CD4-positive, alpha-beta memory T cell (primary cell): ENCODE measurements at regions of chr13 and their contacts with region 1.

Region 1: DNA sequence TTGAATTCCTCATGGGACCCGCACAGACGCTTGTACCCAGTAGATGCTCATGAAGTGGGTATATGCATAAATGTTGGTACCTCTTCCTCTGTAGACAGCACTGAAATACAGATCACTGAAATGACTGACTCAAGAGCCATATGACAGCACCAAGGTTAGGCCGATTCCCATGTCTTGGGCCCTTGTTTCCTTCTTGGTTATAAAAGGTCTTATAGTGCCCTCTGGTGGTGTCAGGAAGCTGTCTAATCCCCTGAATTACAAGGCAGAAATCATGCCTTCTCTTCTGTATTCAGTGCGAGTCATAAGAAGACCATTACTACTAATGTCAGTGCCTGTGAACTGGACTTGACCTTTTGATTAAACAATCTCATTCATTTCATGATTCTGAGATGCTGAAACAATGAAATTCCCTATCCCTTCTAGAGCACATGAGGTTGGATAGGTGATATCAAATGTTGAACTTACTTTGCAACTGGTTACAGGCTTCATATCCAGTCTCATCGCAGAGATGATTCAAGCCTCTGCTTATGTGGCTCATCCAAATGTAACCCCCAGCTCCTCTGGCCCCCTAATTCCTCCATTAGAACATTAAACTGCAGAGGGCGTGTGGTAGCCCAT is 59.7 kb downstream of the SPATA13 start:
- DNase-seq: peak; percentile 64 to 72 (median 67)
- H3K4me3 ChIP-seq: no peak overlapping the region
- H3K4me3 Mint-ChIP-seq: no peak overlapping the region
- H3K27ac ChIP-seq: no peak overlapping the region
- H3K27ac Mint-ChIP-seq: peak overlapping the region in 2 of 7 donors; percentile 17 to 61
- H3K4me1 ChIP-seq: peaks cover 16% of the 10 kb centered on the region
- H3K4me1 Mint-ChIP-seq: peaks cover 13 to 30% (median 19%) of the 10 kb centered on the region in 4 donors
- H3K27me3 ChIP-seq: no peaks in the 10 kb centered on the region
- H3K27me3 Mint-ChIP-seq: peaks cover 0 to 2% of the 10 kb centered on the region in 2 donors

Region 2: DNA sequence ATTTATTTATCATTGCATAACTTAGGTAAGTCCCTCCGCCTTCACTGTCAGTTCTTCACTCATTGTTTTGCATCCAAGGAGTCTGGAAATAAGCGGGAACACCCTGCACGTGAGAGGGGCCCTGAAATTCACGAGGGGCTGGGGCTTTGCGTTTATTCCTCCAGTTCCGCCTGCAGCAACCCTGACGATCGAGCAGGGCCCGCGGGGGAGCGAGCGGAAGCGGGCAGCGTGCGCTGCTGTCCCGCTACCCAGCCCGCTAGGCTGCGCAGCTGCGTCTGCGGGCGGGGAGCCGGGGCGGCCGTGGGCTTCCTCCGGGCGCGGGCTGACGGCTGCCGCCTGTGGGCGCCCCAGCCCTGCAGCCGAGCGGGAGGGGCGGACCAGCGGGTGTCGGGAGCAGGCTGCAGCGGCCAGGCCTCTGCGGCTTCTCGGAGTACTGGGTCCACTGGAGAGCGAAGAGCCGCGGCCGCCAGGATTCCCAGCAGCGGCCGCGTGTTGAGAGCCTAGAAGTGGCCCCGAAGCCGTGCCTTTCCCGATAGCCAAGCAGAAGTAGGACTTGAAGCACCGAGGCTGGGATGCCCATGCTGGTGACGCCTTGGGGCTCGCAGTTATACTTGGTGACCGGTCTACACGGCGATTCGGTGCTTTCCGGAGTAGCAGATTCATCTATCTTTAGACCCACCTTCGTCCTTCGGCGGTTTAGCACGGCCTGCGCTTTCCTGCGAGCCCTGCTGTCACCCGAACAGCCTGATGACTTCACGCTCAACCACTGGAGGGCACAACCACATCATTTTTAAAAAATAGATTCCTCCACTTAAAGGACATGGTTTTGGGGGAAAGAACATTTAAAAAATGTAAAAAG is 753.8 kb before region 1 on chr13:
- CTCF ChIA-PET with region 1: interaction called, 4 read pairs
- POLR2A ChIA-PET with region 1: no interaction called
- intact Hi-C with region 1: loop called (anchors 1 kb)
- DNase-seq: peak; percentile 43 to 65 (median 63)
- H3K4me3 ChIP-seq: peak overlapping the region in 1 of 2 donors; percentile 44
- H3K4me3 Mint-ChIP-seq: peak overlapping the region; percentile 76 to 89 (median 83)
- H3K27ac ChIP-seq: no peak overlapping the region
- H3K27ac Mint-ChIP-seq: peak overlapping the region in 3 of 7 donors; percentile 11 to 69 (median 63)
- H3K4me1 ChIP-seq: peaks cover 4% of the 10 kb centered on the region
- H3K4me1 Mint-ChIP-seq: peaks cover 0 to 8% (median 2%) of the 10 kb centered on the region in 4 donors
- H3K27me3 ChIP-seq: no peaks in the 10 kb centered on the region
- H3K27me3 Mint-ChIP-seq: peaks cover 7% of the 10 kb centered on the region in 2 donors

Region 3: GRCh38 chr13:24020375-24020830 is 199.8 kb before region 1 on chr13:
- CTCF ChIA-PET with region 1: interaction called, 16 read pairs
- POLR2A ChIA-PET with region 1: no interaction called
- intact Hi-C with region 1: loop called (anchors 1 kb)
- DNase-seq: peak in 3 of 5 donors; percentile 9 to 17 (median 13)
- H3K4me3 ChIP-seq: no peak overlapping the region
- H3K4me3 Mint-ChIP-seq: no peak overlapping the region
- H3K27ac ChIP-seq: no peak overlapping the region
- H3K27ac Mint-ChIP-seq: no peak overlapping the region
- H3K4me1 ChIP-seq: no peaks in the 10 kb centered on the region
- H3K4me1 Mint-ChIP-seq: no peaks in the 10 kb centered on the region
- H3K27me3 ChIP-seq: no peaks in the 10 kb centered on the region
- H3K27me3 Mint-ChIP-seq: peaks cover 1 to 2% of the 10 kb centered on the region in 2 donors

Region 4: DNA sequence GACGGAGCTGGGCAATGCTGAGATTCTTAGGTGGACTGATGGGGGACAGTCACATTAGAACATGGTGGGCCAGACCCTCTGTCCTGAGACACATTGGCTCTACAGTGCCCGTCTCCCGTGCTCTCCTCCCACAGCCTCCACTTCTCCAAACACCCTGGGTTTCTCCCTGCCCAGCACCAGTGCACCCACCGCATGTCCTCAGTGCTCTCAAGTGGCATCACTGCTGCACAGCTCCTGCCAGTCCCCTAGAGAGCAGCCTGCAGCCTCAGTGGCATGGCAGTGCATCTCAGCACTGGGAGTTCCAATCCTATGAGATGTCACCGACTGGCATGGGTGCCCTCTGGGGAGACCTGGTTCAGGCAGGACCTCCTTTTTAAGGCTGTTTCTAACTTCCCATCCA is 70.1 kb before region 1 on chr13:
- CTCF ChIA-PET with region 1: no interaction called
- POLR2A ChIA-PET with region 1: no interaction called
- intact Hi-C with region 1: no loop called
- DNase-seq: no peak
- H3K4me3 ChIP-seq: no peak overlapping the region
- H3K4me3 Mint-ChIP-seq: no peak overlapping the region
- H3K27ac ChIP-seq: no peak overlapping the region
- H3K27ac Mint-ChIP-seq: no peak overlapping the region
- H3K4me1 ChIP-seq: no peaks in the 10 kb centered on the region
- H3K4me1 Mint-ChIP-seq: no peaks in the 10 kb centered on the region
- H3K27me3 ChIP-seq: no peaks in the 10 kb centered on the region
- H3K27me3 Mint-ChIP-seq: peaks cover 5 to 9% of the 10 kb centered on the region in 2 donors

Region 5: GRCh38 chr13:24160454-24161009 is 59.7 kb before region 1 on chr13 and contains the start of gene SPATA13:
- CTCF ChIA-PET with region 1: interaction called, 7 read pairs
- POLR2A ChIA-PET with region 1: no interaction called
- intact Hi-C with region 1: loop called (anchors 2 kb)
- DNase-seq: peak; percentile 88 to 90 (median 88)
- H3K4me3 ChIP-seq: peak within 1 kb of the TSS; percentile 69
- H3K4me3 Mint-ChIP-seq: peak within 1 kb of the TSS; percentile 78 to 90 (median 86)
- H3K27ac ChIP-seq: peak within 1 kb of the TSS; percentile 19
- H3K27ac Mint-ChIP-seq: peak within 1 kb of the TSS in 5 of 7 donors; percentile 32 to 83 (median 72)
- H3K4me1 ChIP-seq: peaks cover 19% of the 10 kb centered on the region
- H3K4me1 Mint-ChIP-seq: peaks cover 9 to 16% (median 12%) of the 10 kb centered on the region in 4 donors
- H3K27me3 ChIP-seq: no peaks in the 10 kb centered on the region
- H3K27me3 Mint-ChIP-seq: peaks cover 0 to 2% of the 10 kb centered on the region in 2 donors
- total RNA-seq, gene SPATA13: 107 to 110 TPM

Region 6: GRCh38 chr13:24491845-24492244 is 271.6 kb after region 1 on chr13:
- CTCF ChIA-PET with region 1: no interaction called
- POLR2A ChIA-PET with region 1: no interaction called
- intact Hi-C with region 1: no loop called
- DNase-seq: no peak
- H3K4me3 ChIP-seq: no peak overlapping the region
- H3K4me3 Mint-ChIP-seq: no peak overlapping the region
- H3K27ac ChIP-seq: no peak overlapping the region
- H3K27ac Mint-ChIP-seq: no peak overlapping the region
- H3K4me1 ChIP-seq: no peaks in the 10 kb centered on the region
- H3K4me1 Mint-ChIP-seq: no peaks in the 10 kb centered on the region
- H3K27me3 ChIP-seq: no peaks in the 10 kb centered on the region
- H3K27me3 Mint-ChIP-seq: no peaks in the 10 kb centered on the region